Heart left ventricle (tissue), 16 donors: ENCODE measurements at regions of chr22 and their contacts with region 1.

Region 1: GRCh38 chr22:29315286-29316131 is at the start of gene RASL10A:
- DNase-seq: peak in 2 of 5 donors; percentile 20 to 62
- ATAC-seq: no peak
- H3K4me3 ChIP-seq: peak within 1 kb of the TSS; percentile 28 to 63 (median 47)
- H3K27ac ChIP-seq: peak within 1 kb of the TSS in 1 of 12 donors; percentile 9
- H3K4me1 ChIP-seq: peaks cover 4 to 52% (median 37%) of the 10 kb centered on the region in 12 donors
- H3K27me3 ChIP-seq: peaks cover 4 to 36% (median 17%) of the 10 kb centered on the region in 9 donors
- CTCF ChIP-seq: no peak
- POLR2A ChIP-seq: no peak
- total RNA-seq, gene RASL10A: 0.29 to 5.8 (median 1.3) TPM

Region 2: DNA sequence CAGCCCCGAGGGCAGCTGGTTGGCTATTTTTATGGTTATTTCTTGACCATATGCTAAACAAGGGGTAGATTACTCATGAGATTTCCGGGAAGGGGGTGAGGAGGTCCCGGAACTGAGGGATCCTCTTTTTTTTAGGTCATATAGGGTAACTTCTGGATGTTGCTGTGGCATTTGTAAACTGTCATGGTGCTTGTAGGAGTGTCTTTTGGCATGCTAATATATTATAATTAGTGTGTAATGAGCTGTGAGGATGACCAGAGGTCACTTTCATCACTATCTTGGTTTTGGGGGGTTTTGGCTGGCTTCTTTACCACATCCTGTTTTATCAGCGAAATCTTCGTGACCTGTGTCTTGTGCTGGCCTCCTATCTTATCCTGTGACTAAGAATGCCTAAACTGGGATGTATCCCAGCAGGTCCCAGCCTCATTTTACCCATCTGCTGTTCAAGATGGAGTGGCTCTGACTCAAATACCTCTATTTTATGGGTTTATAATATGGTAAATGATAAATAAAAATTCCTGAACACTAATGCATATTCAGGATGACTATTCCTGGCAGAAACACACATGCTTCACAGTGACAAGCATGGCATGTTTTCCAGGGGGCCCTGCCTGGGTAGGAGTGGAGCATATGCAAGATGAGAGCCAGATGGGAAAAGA is 231.4 kb before region 1 on chr22:
- intact Hi-C with region 1: no loop called
- DNase-seq: no peak
- ATAC-seq: no peak
- H3K4me3 ChIP-seq: no peak overlapping the region
- H3K27ac ChIP-seq: peak overlapping the region in 1 of 12 donors; percentile 35
- H3K4me1 ChIP-seq: peaks cover 0 to 57% (median 27%) of the 10 kb centered on the region in 12 donors
- H3K27me3 ChIP-seq: no peaks in the 10 kb centered on the region
- CTCF ChIP-seq: no peak
- POLR2A ChIP-seq: no peak

Region 3: DNA sequence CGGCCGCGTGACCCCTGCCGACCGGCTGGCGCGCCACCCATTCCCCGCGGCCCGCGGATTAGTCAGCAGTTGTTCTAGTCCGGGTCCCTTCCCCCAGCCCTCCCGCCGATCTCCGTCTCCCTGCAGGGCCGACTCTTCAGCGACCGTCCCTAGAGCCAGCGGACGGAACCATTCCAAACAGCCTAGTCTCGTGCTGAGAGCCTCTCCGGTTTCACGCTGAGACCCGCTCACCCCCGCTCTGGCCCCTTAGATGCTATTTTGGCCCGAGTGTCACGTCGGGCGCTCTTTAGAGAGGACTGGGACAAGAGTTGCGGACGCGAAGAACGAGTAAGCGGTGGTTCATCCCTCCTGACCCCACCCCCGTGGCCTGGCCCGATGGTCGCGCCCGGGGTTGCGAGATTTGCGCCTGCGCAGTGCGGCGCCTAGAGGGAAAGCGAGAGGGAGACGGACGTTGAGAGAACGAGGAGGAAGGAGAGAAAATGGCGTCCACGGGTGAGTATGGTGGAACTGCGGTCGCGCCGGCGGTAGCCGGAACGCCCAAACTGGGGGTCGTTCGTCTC is 47.6 kb before region 1 on chr22 and contains the starts of genes EWSR1 and RHBDD3:
- intact Hi-C with region 1: loop called in 1 of 10 experiments (anchors 2 kb)
- DNase-seq: peak; percentile 95 to 98 (median 98)
- ATAC-seq: peak; percentile 91 to 97 (median 92)
- H3K4me3 ChIP-seq: peak within 1 kb of the TSS; percentile 78 to 99 (median 92)
- H3K27ac ChIP-seq: peak within 1 kb of the TSS; percentile 97 to 100 (median 99)
- H3K4me1 ChIP-seq: peaks cover 0 to 61% (median 49%) of the 10 kb centered on the region in 12 donors
- H3K27me3 ChIP-seq: no peaks in the 10 kb centered on the region
- CTCF ChIP-seq: no peak
- POLR2A ChIP-seq: peak in 1 of 2 donors; percentile 49
- total RNA-seq, gene EWSR1: 103 to 202 (median 138) TPM
- total RNA-seq, gene RHBDD3: 10.9 to 29.5 (median 12.6) TPM

Region 4: DNA sequence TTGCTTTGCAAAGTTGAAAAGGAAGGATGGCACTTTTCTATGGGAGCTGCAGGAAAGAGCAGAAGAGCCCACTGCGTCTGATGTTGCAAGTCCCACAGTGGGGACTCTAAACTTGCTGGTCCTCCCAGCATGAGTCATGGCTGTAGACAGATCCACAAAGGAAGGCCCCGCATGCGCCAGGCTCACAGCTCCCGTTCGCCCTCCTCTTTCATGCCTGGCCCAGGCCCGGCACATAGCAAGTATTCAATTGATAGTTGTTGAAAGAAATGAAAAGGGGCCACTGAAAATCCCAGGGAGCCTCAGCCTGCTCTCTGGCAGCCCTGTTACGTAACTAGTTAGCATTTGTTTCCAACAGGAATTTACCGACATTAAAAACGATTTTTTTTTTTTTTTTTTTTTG is 54.0 kb after region 1 on chr22:
- intact Hi-C with region 1: no loop called
- DNase-seq: peak; percentile 44 to 80 (median 67)
- ATAC-seq: peak; percentile 68 to 91 (median 86)
- H3K4me3 ChIP-seq: no peak overlapping the region
- H3K27ac ChIP-seq: peak overlapping the region in 4 of 12 donors; percentile 15 to 63 (median 25)
- H3K4me1 ChIP-seq: peaks cover 0 to 51% (median 6%) of the 10 kb centered on the region in 12 donors
- H3K27me3 ChIP-seq: no peaks in the 10 kb centered on the region
- CTCF ChIP-seq: no peak
- POLR2A ChIP-seq: no peak

Region 5: DNA sequence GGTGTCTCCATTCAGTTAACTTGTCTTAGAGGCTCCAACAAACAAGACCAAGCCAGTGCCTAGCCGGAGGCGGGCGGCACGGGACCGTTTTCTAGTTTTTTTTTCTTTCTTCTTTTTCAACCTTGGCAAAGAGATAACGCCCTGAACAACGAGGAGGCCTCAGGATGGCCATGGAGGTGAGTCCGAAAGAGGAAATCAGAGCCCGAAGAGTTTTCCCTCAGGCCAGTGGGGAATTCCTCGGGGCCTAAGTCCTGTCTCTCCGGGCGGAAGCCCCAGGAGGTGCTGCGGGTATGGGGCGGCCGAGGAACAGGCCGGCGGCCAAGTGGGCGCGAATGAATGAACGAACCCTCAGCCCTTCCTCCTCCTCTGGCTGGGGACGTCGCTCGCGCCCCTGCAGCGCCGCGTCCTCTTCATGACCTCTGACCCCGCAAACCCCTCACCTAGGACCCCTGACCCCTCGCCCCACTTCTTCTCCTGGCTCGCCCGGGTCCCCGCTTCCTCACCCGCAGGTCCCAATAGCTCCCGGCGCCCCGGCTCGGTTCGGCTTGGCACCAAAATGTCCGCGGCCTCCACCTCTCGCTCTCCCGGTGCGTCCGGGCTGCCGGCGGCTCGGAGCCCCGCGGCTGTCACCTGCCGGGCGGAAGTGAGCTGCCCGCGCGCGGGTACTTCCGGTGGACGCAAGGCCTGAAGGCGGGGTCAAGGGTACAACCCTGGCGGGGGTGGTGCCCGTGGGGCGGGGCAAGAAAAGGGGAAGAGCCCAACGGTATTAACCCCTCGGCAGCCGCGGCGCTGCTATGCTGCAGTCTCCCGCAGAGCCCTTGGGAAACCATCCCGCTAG is 72.6 kb after region 1 on chr22 and contains the start of gene AP1B1:
- intact Hi-C with region 1: no loop called
- DNase-seq: peak; percentile 94 to 97 (median 97)
- ATAC-seq: peak; percentile 95 to 98 (median 98)
- H3K4me3 ChIP-seq: peak within 1 kb of the TSS; percentile 73 to 90 (median 78)
- H3K27ac ChIP-seq: peak within 1 kb of the TSS; percentile 48 to 93 (median 86)
- H3K4me1 ChIP-seq: peaks cover 0 to 59% (median 23%) of the 10 kb centered on the region in 12 donors
- H3K27me3 ChIP-seq: no peaks in the 10 kb centered on the region
- CTCF ChIP-seq: peak in 2 of 12 donors; percentile 14 to 17
- POLR2A ChIP-seq: peak in 1 of 2 donors; percentile 58
- total RNA-seq, gene AP1B1: 30.3 to 74.8 (median 33.8) TPM

Region 6: GRCh38 chr22:29641700-29642330 is 326.3 kb after region 1 on chr22:
- intact Hi-C with region 1: no loop called
- DNase-seq: no peak
- ATAC-seq: no peak
- H3K4me3 ChIP-seq: no peak overlapping the region
- H3K27ac ChIP-seq: peak overlapping the region in 1 of 12 donors; percentile 43
- H3K4me1 ChIP-seq: peaks cover 0 to 9% (median 0%) of the 10 kb centered on the region in 12 donors
- H3K27me3 ChIP-seq: no peaks in the 10 kb centered on the region
- CTCF ChIP-seq: no peak
- POLR2A ChIP-seq: no peak